Caco-2 (cell line): ENCODE measurements at regions of chr5 and their contacts with region 1.

Region 1: DNA sequence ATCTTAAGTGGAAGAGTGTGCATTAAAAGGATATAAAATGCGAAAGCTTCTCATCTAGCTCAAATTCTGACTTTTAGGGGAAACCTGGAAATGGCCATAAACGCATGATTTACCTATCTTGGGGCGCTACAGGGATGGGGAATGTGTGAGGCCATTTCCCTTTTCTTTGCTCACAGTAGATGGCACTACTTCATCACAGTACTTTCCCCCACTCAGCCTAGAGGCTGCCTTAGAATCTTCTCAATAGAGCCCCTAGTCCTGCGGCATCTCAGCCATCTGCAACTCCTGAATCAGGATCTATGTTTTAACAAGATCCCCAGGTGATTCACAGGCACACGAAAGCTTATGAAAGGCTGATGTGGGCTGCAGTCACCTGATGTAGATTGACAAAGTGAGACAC is 110.8 kb downstream of the LHFPL2 start:
- DNase-seq: peak; percentile 46 to 57
- H3K4me3 ChIP-seq: no peak overlapping the region
- H3K4me3 Mint-ChIP-seq: no peak overlapping the region
- H3K27ac Mint-ChIP-seq: no peak overlapping the region
- H3K4me1 ChIP-seq: no peaks in the 10 kb centered on the region
- H3K4me1 Mint-ChIP-seq: peaks cover 17% of the 10 kb centered on the region
- H3K27me3 ChIP-seq: no peaks in the 10 kb centered on the region
- H3K27me3 Mint-ChIP-seq: no peaks in the 10 kb centered on the region
- CTCF ChIP-seq: peak in 1 of 2 experiments; percentile 72

Region 2: DNA sequence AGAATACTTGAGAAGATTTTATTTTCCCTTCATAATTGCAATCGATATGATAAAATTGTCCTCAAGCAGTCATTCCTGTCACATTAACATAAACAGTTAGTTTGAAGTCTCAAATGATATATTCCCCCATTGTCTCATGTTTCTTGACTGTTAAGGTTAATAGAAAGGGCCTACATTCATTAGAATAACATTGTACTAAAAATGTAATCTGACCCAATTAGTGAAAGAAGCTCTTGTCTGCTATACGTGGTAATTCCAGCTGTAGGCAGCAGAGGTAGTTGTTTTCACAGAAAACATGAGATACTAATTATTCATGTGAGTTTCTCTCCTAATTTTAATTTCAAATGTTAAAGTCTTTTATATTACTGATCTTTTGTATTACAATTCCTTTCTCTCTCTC is 217.4 kb before region 1 on chr5:
- CTCF ChIA-PET with region 1: no interaction called
- POLR2A ChIA-PET with region 1: no interaction called
- intact Hi-C with region 1: loop called (anchors 10 kb)
- DNase-seq: peak in 1 of 2 experiments; percentile 13
- H3K4me3 ChIP-seq: no peak overlapping the region
- H3K4me3 Mint-ChIP-seq: no peak overlapping the region
- H3K27ac Mint-ChIP-seq: no peak overlapping the region
- H3K4me1 ChIP-seq: no peaks in the 10 kb centered on the region
- H3K4me1 Mint-ChIP-seq: no peaks in the 10 kb centered on the region
- H3K27me3 ChIP-seq: no peaks in the 10 kb centered on the region
- H3K27me3 Mint-ChIP-seq: no peaks in the 10 kb centered on the region
- CTCF ChIP-seq: peak; percentile 46 to 63

Region 3: DNA sequence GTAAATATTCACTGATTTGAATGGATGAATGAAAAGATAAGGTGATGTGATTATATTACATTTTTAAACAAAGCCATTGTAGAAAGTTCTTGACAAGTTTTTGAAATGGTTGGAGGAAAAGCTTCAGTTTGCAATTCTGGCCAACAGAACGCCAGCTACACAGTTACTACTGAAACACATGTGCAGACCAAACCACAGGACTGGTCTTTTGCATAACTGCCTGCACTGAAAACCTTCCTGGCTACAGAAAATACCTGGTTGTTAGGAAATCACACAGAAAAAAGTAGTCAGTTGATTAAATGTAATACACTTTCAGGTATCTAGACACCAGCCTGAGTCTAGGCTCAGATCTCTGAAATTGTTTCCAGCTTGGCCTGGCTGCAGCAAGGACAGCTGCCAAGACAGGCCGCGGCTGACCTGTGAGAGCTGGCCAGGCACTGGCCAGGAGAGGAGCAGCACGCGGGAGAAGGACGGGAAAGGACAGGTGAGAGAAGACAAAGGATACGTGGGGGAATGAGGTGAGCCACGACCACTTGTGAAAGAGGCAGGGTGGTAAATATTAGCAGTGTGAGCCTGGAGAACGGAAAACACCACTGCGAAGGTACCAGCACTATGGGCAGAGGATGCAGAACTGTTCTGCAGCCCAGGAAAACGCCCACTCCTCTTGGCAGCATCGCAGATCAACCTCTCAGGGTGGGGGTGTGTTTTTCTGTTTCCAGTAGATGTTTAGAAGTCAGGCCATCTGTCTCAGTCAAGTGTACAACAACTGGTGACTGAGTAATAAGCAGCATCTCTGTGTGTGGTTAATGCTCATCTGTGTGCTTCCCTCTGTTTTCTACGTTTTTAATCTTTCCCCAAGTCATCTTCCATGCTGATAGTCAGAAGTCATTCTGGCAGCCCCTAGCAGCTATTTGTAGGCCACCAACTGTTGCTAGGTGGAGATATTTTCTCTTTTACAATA is 40.0 kb before region 1 on chr5:
- CTCF ChIA-PET with region 1: interaction called, 3 read pairs
- POLR2A ChIA-PET with region 1: no interaction called
- intact Hi-C with region 1: loop called (anchors 1 kb)
- DNase-seq: no peak
- H3K4me3 ChIP-seq: no peak overlapping the region
- H3K4me3 Mint-ChIP-seq: no peak overlapping the region
- H3K27ac Mint-ChIP-seq: no peak overlapping the region
- H3K4me1 ChIP-seq: peaks cover 32% of the 10 kb centered on the region
- H3K4me1 Mint-ChIP-seq: peaks cover 55% of the 10 kb centered on the region
- H3K27me3 ChIP-seq: no peaks in the 10 kb centered on the region
- H3K27me3 Mint-ChIP-seq: no peaks in the 10 kb centered on the region
- CTCF ChIP-seq: no peak

Region 4: GRCh38 chr5:78638423-78638822 is 100.6 kb after region 1 on chr5:
- CTCF ChIA-PET with region 1: no interaction called
- POLR2A ChIA-PET with region 1: no interaction called
- intact Hi-C with region 1: loop called (anchors 2 kb)
- DNase-seq: peak; percentile 69 to 82
- H3K4me3 ChIP-seq: no peak overlapping the region
- H3K4me3 Mint-ChIP-seq: no peak overlapping the region
- H3K27ac Mint-ChIP-seq: no peak overlapping the region
- H3K4me1 ChIP-seq: peaks cover 34% of the 10 kb centered on the region
- H3K4me1 Mint-ChIP-seq: peaks cover 46% of the 10 kb centered on the region
- H3K27me3 ChIP-seq: no peaks in the 10 kb centered on the region
- H3K27me3 Mint-ChIP-seq: no peaks in the 10 kb centered on the region
- CTCF ChIP-seq: no peak

Region 5: DNA sequence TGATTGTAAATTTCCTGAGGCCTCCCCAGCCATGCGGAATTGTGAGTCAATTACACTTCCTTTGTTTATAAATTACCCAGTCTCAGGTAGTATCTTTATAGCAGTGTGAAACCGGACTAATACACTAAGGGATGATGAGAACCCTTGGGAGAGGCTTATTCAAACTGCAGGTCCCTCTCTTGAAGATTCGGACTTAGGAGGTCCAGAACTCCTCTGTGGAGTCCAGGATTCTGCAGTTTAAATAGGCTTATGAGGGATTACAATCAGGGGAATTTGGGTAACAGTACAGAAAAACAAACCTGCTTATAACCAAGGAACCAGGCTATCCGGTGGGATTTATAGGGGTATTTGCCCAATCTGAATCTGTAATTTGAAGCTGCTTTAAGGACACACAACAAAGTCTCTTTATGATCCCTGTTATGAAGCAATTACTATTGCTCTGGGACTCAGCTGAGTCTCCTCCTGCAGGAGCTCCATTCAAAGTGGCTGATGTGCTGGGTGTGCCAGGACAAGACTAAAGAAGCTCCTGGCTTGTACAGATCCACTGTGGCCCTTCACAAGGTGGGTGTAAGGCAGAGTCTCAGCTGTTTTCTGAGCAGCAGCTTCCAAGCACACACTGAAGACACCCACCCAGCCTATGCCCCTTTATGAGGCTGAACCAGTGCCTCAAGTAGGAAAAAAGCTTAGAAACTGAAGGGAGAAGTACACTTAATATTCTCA is 152.6 kb after region 1 on chr5:
- CTCF ChIA-PET with region 1: no interaction called
- POLR2A ChIA-PET with region 1: no interaction called
- intact Hi-C with region 1: no loop called
- DNase-seq: no peak
- H3K4me3 ChIP-seq: no peak overlapping the region
- H3K4me3 Mint-ChIP-seq: no peak overlapping the region
- H3K27ac Mint-ChIP-seq: no peak overlapping the region
- H3K4me1 ChIP-seq: peaks cover 2% of the 10 kb centered on the region; the same call in 1 of the 2 replicates
- H3K4me1 Mint-ChIP-seq: no peaks in the 10 kb centered on the region
- H3K27me3 ChIP-seq: no peaks in the 10 kb centered on the region
- H3K27me3 Mint-ChIP-seq: no peaks in the 10 kb centered on the region
- CTCF ChIP-seq: no peak

Region 6: GRCh38 chr5:78747705-78748359 is 210.0 kb after region 1 on chr5:
- CTCF ChIA-PET with region 1: no interaction called
- POLR2A ChIA-PET with region 1: no interaction called
- intact Hi-C with region 1: no loop called
- DNase-seq: peak; percentile 28 to 41
- H3K4me3 ChIP-seq: no peak overlapping the region
- H3K4me3 Mint-ChIP-seq: no peak overlapping the region
- H3K27ac Mint-ChIP-seq: no peak overlapping the region
- H3K4me1 ChIP-seq: 0 out of 2 replicates have a peak, but pooled peaks cover 5% of the 10 kb centered on the region
- H3K4me1 Mint-ChIP-seq: peaks cover 6% of the 10 kb centered on the region
- H3K27me3 ChIP-seq: no peaks in the 10 kb centered on the region
- H3K27me3 Mint-ChIP-seq: no peaks in the 10 kb centered on the region
- CTCF ChIP-seq: no peak

Region 7: DNA sequence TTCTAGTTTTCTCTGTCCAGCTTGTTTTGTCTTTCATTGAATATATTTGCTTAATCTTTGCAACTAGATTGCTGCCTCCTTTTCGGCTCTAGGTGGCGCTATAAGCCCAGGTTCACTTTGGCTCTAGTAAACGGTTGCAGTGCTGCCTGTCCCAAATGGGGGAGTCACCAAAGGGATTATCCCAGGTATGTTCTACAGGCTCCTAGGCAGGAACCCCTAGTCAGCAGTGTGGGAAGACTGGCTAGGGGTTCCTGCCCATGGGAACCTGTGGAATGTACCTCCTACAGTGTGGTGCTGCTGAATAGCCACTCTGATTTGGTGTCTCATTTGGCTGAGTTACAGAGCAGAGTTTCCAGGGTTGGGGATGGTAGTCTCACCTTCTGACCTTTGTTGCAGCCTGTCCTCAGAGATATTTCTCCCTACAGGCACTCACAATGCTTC is 362.1 kb after region 1 on chr5:
- CTCF ChIA-PET with region 1: no interaction called
- POLR2A ChIA-PET with region 1: no interaction called
- intact Hi-C with region 1: loop called (anchors 5 kb)
- DNase-seq: peak; percentile 71
- H3K4me3 ChIP-seq: no peak overlapping the region
- H3K4me3 Mint-ChIP-seq: no peak overlapping the region
- H3K27ac Mint-ChIP-seq: no peak overlapping the region
- H3K4me1 ChIP-seq: 0 out of 2 replicates have a peak, but pooled peaks cover 4% of the 10 kb centered on the region
- H3K4me1 Mint-ChIP-seq: no peaks in the 10 kb centered on the region
- H3K27me3 ChIP-seq: no peaks in the 10 kb centered on the region
- H3K27me3 Mint-ChIP-seq: no peaks in the 10 kb centered on the region
- CTCF ChIP-seq: peak; percentile 69 to 86

Region 8: GRCh38 chr5:78964887-78965286 is 427.1 kb after region 1 on chr5:
- CTCF ChIA-PET with region 1: no interaction called
- POLR2A ChIA-PET with region 1: no interaction called
- intact Hi-C with region 1: loop called (anchors 1 kb)
- DNase-seq: peak in 1 of 2 experiments; percentile 62
- H3K4me3 ChIP-seq: no peak overlapping the region
- H3K4me3 Mint-ChIP-seq: no peak overlapping the region
- H3K27ac Mint-ChIP-seq: no peak overlapping the region
- H3K4me1 ChIP-seq: no peaks in the 10 kb centered on the region
- H3K4me1 Mint-ChIP-seq: no peaks in the 10 kb centered on the region
- H3K27me3 ChIP-seq: no peaks in the 10 kb centered on the region
- H3K27me3 Mint-ChIP-seq: no peaks in the 10 kb centered on the region
- CTCF ChIP-seq: peak; percentile 30 to 56